ENCODE measurements at regions of chr4 and their contacts with region 1.

Region 1: GRCh38 chr4:47933840-47934239 is 19.5 kb upstream of the NFXL1 start:
- DNase-seq: peak; percentile 66
- ATAC-seq: peak; percentile 61
- H3K4me3 ChIP-seq: no peak overlapping the region
- H3K4me3 Mint-ChIP-seq: no peak overlapping the region
- H3K27ac ChIP-seq: no peak overlapping the region
- H3K27ac Mint-ChIP-seq: no peak overlapping the region
- H3K4me1 ChIP-seq: peaks cover 0 to 7% of the 10 kb centered on the region in 2 donors
- H3K4me1 Mint-ChIP-seq: peaks cover 8% of the 10 kb centered on the region
- H3K27me3 ChIP-seq: peaks cover 0 to 7% (median 0%) of the 10 kb centered on the region in 4 experiments
- H3K27me3 Mint-ChIP-seq: peaks cover 15% of the 10 kb centered on the region
- CTCF ChIP-seq: peak; percentile 87

Region 2: DNA sequence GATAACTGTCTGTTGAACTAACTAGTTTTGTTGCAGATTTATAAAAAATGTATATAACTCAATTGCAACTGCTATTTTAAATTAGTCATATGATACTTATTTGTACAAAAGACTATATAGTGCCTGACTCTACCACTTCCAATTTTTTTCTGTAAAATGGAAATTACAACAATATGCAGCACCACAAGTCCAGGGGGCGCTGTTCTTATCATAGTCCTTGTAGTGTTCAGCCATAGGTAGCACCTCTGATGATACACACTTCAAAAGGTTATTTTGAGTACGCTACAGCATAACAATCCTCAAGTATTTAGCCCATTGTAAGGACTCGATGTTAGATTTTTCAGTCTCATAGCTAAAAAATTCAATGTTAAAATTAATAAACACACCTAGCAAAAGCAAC is 270.9 kb before region 1 on chr4:
- CTCF ChIA-PET with region 1: interaction called, 48 read pairs
- POLR2A ChIA-PET with region 1: no interaction called
- intact Hi-C with region 1: no loop called
- DNase-seq: peak; percentile 8
- ATAC-seq: no peak
- H3K4me3 ChIP-seq: no peak overlapping the region
- H3K4me3 Mint-ChIP-seq: no peak overlapping the region
- H3K27ac ChIP-seq: no peak overlapping the region
- H3K27ac Mint-ChIP-seq: no peak overlapping the region
- H3K4me1 ChIP-seq: no peaks in the 10 kb centered on the region
- H3K4me1 Mint-ChIP-seq: no peaks in the 10 kb centered on the region
- H3K27me3 ChIP-seq: peaks cover 0 to 3% (median 0%) of the 10 kb centered on the region in 4 experiments
- H3K27me3 Mint-ChIP-seq: peaks cover 16% of the 10 kb centered on the region
- CTCF ChIP-seq: peak; percentile 26

Region 3: GRCh38 chr4:47668810-47669408 is 264.9 kb before region 1 on chr4:
- CTCF ChIA-PET with region 1: interaction called, 48 read pairs
- POLR2A ChIA-PET with region 1: no interaction called
- intact Hi-C with region 1: loop called (anchors 1 kb)
- DNase-seq: peak; percentile 54
- ATAC-seq: no peak
- H3K4me3 ChIP-seq: no peak overlapping the region
- H3K4me3 Mint-ChIP-seq: no peak overlapping the region
- H3K27ac ChIP-seq: no peak overlapping the region
- H3K27ac Mint-ChIP-seq: no peak overlapping the region
- H3K4me1 ChIP-seq: no peaks in the 10 kb centered on the region
- H3K4me1 Mint-ChIP-seq: peaks cover 2% of the 10 kb centered on the region
- H3K27me3 ChIP-seq: peaks cover 0 to 3% (median 0%) of the 10 kb centered on the region in 4 experiments
- H3K27me3 Mint-ChIP-seq: peaks cover 32% of the 10 kb centered on the region
- CTCF ChIP-seq: peak; percentile 81

Region 4: DNA sequence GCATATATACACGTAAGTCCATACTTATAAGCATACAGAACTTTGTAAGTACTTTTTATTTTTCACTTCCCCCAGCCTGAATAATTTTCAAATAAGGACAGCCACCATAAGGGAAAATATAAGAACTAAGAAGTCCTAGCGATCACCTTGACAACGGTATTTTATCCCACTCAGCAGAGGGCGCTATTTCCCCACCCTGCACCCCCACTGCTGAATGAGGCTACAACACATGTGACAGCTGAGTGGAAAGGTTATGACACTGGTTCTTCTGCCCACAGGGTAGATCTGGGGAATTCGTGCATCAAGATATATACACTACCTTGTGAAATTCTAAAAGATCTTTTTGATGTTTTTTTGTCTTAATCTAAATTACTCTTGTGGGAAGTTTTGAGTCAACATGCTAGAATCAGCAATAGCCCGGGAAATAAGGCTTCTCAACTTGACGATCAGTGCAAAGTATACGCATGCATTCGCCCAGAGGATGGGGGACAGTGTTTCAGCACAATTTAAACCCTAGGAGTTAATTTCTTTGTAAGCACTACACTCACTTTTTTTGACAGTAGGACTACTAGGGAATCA is 247.5 kb before region 1 on chr4:
- CTCF ChIA-PET with region 1: interaction called, 53 read pairs
- POLR2A ChIA-PET with region 1: no interaction called
- intact Hi-C with region 1: loop called (anchors 1 kb)
- DNase-seq: peak; percentile 64
- ATAC-seq: peak; percentile 36
- H3K4me3 ChIP-seq: no peak overlapping the region
- H3K4me3 Mint-ChIP-seq: no peak overlapping the region
- H3K27ac ChIP-seq: no peak overlapping the region
- H3K27ac Mint-ChIP-seq: no peak overlapping the region
- H3K4me1 ChIP-seq: no peaks in the 10 kb centered on the region
- H3K4me1 Mint-ChIP-seq: no peaks in the 10 kb centered on the region
- H3K27me3 ChIP-seq: peaks cover 0 to 1% (median 0%) of the 10 kb centered on the region in 4 experiments
- H3K27me3 Mint-ChIP-seq: peaks cover 18% of the 10 kb centered on the region
- CTCF ChIP-seq: peak; percentile 76

Region 5: GRCh38 chr4:48008021-48008596 is 74.3 kb after region 1 on chr4:
- CTCF ChIA-PET with region 1: no interaction called
- POLR2A ChIA-PET with region 1: no interaction called
- intact Hi-C with region 1: no loop called
- DNase-seq: no peak
- ATAC-seq: no peak
- H3K4me3 ChIP-seq: no peak overlapping the region
- H3K4me3 Mint-ChIP-seq: no peak overlapping the region
- H3K27ac ChIP-seq: no peak overlapping the region
- H3K27ac Mint-ChIP-seq: no peak overlapping the region
- H3K4me1 ChIP-seq: no peaks in the 10 kb centered on the region
- H3K4me1 Mint-ChIP-seq: no peaks in the 10 kb centered on the region
- H3K27me3 ChIP-seq: peaks cover 0 to 8% (median 4%) of the 10 kb centered on the region in 4 experiments
- H3K27me3 Mint-ChIP-seq: peaks cover 17% of the 10 kb centered on the region
- CTCF ChIP-seq: no peak